Left cardiac atrium (tissue), 4 donors: ENCODE measurements at regions of chr15 and their contacts with region 1.

Region 1: DNA sequence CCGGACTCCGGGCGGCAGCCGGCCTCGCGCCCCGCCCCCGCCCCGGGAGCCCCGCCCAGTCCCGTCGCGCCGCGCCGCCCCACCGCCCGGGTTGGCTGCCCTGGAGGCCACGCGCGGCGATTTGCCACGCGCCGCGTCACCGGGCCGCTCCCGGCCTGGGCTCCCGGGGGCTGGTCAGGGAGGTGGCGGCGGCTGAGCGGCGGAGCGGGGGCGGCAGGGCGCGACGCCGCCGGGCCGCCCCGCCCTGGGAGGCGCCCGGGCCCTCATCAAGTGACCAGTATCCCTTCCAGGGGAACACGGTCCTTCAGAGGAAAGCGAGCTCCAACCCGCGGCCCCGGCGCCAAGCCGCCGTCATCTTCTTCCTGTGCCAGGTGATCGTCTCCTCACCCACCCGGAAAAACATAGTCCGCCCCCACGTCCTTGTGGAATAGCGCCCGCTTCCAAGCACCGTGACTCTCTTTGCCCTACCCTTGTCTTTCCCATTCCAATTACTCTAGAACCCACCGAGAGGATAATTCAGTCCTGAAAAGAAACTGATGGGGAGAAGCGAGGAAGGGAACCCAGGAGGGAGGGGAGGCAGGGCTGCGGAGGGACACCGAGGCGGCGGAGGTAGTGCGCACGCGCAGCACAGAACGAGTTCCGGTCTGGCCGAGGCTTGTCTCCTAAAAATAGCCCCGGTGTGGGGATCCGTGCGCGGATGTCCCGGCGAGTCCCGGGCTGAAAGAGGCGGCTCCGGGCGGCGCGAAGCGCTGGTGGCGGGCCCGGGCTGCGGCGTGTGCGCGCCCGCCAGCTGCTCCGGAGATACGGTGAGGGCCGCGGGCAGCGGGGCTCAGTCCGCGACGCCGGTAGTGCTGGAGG is at the start of gene MEF2A:
- DNase-seq: peak; percentile 97
- ATAC-seq: peak; percentile 83 to 86
- total RNA-seq, gene MEF2A: 96.0 to 145 TPM

Region 2: GRCh38 chr15:99409097-99409473 is 156.4 kb before region 1 on chr15:
- intact Hi-C with region 1: loop called in 1 of 2 experiments (anchors 5 kb)
- DNase-seq: peak; percentile 72
- ATAC-seq: peak; percentile 75 to 78

Region 3: DNA sequence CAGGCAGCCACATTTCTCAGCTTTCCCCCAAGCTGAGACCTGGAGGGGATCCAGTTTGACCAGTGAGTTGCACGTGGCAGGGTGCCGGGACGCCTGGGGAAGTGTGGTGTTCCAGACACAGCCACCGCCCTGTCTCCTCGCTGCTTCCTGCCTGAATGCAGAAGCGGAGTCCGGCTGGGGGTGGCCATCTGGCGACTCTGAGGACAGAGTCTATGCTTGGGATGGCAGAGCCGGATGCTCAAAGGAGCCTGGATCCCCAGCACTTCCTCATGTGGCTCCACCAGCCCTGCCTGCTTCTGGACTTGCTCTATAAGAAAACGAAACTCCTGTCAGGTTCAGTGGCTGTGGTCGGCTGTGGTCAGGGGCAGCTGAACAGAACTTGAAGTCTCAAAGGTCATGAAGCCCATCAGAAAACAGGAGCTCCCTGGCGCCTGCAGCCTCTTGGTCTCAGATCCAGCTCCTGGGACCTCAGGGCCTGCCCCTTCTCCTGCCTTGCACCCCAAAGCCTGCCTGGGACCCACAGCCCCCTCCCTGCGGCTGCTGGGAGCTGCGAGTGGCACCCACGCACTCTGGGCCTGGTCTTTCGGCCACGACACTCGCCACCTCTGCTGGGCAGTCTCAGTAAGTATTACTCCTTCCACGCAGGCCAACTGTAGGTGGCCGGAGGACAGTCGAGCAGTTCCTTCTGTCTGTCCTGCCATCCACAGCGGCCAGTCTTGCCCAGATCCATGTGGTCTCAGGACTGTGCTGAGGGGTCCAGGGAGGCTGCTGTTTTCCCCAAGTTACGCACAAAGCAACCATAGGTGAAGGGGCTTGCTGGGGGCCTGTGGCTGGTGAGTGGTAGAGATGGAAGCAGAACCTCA is 112.5 kb before region 1 on chr15:
- intact Hi-C with region 1: loop called in 1 of 2 experiments (anchors 2 kb)
- DNase-seq: peak; percentile 95
- ATAC-seq: peak; percentile 33 to 55

Region 4: DNA sequence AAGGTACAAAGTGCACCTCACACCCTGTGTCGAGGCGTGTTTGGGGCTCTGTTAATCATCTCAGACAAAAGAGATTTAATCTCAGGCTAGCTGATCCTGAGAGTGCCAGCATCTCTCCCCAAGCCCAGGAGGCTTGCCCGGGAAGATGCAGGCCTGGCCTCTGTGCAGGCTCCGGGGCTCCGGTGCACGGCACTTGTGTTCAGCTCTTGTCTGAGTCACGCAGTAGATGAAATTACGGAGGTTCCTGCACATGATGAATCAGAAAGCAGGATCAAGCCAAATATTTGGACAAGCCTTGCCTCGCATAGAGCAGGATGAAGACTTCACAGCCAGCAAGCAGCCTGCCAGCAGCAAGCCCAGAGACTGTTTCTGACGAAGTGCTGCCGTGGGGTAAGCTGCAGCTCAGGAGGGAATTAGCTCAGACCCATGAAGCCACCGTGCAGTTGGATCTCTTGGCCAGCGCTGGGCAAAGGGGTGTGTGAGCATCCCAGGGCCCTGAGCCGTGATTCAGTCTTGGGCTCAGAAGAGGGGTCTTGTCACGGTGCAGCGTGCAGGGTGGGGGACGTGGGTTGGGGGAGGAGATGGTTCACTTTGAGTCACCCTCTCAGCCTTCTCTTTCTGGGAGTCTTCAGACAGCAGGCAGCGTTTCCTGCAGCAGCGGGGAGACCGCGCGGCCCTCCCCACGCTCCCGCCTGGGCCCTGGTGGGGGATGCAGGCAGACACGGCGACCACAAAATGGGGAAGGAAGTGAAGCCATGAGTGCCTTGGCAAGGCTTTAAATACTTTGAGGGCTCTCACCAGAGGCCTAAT is 88.9 kb before region 1 on chr15:
- intact Hi-C with region 1: loop called in 1 of 2 experiments (anchors 10 kb)
- DNase-seq: peak; percentile 81
- ATAC-seq: peak; percentile 35 to 79

Region 5: DNA sequence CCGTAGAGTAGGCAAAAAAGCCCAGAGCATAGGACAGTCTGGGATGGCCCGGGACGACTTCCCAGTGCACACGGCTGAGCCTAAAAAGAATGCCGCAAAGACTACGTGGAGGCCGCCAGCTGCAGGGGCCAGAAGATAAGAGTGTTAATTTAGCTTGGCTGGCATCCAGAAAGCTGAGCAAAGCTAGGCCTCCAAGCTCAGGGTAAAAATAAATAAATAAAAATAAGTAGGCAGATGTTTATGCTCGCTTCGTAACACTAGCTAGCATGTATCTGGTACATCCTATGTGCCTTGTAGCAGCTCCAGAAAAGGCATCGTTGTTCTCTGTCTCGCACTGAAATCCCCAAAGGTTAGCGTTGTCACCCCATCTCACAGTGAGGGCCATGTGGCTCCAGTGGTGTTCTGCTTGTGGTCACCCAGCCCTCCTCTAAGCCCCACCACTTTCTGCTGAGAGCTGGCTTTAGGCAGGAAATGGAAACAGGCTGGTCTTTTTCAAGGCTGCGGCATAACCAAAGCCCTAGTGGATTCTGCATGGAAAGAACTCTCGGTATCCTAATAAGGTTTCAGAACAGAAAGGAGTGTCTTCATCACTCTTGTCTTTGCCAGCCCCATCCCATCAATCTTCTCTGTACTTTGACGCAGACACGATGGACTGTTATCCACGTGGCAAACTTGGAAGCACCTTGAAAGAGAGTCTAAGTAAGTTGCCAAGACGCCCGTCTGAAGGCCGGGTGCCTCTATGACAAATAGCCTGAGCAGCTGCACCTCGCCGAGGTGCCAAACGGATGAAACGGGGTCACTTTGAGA is 57.8 kb before region 1 on chr15:
- intact Hi-C with region 1: loop called in 1 of 2 experiments (anchors 5 kb)
- DNase-seq: peak; percentile 76
- ATAC-seq: peak; percentile 84 to 85

Region 6: DNA sequence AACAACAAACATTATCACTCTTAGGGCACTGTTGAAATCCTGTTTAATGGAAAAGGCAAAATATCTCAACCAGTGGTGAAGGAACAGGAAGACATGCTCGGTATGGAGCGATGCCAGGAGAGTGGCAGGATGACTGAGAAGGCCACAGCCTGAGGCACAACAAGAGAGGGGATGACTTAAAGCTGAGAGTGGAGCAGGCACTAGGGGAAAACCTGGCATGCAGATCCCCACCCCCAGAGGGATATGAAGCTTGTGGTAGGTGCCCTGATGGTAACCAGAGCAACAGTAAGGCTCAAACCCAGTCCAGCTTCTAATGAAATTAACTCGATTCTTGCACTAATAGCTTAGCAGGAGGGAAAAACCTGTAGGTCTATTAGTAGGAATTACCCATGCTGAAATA is 127.3 kb after region 1 on chr15:
- intact Hi-C with region 1: loop called in 1 of 2 experiments (anchors 10 kb)
- DNase-seq: no peak
- ATAC-seq: peak in 1 of 2 donors; percentile 46

Region 7: GRCh38 chr15:99704444-99704838 is 138.9 kb after region 1 on chr15:
- intact Hi-C with region 1: loop called (anchors 5 to 10 kb)
- DNase-seq: no peak
- ATAC-seq: peak; percentile 74 to 76